PC-9 (cell line): ENCODE measurements at regions of chr20 and their contacts with region 1.

Region 1: GRCh38 chr20:59222253-59223181 is 58.9 kb downstream of the ZNF831 start:
- DNase-seq: peak; percentile 53 to 70
- H3K4me3 ChIP-seq: peak overlapping the region; percentile 50; the same call in 1 of the 2 replicates
- H3K27ac ChIP-seq: no peak overlapping the region
- H3K4me1 ChIP-seq: no peaks in the 10 kb centered on the region
- H3K27me3 ChIP-seq: peaks cover 97% of the 10 kb centered on the region
- CTCF ChIP-seq: peak; percentile 98

Region 2: GRCh38 chr20:58236612-58237330 is 985.7 kb before region 1 on chr20:
- CTCF ChIA-PET with region 1: no interaction called
- POLR2A ChIA-PET with region 1: no interaction called
- intact Hi-C with region 1: loop called (anchors 5 kb)
- DNase-seq: peak; percentile 51 to 75
- H3K4me3 ChIP-seq: peak overlapping the region; percentile 68
- H3K27ac ChIP-seq: no peak overlapping the region
- H3K4me1 ChIP-seq: peaks cover 8% of the 10 kb centered on the region; the same call in 1 of the 2 replicates
- H3K27me3 ChIP-seq: no peaks in the 10 kb centered on the region
- CTCF ChIP-seq: peak; percentile 97

Region 3: DNA sequence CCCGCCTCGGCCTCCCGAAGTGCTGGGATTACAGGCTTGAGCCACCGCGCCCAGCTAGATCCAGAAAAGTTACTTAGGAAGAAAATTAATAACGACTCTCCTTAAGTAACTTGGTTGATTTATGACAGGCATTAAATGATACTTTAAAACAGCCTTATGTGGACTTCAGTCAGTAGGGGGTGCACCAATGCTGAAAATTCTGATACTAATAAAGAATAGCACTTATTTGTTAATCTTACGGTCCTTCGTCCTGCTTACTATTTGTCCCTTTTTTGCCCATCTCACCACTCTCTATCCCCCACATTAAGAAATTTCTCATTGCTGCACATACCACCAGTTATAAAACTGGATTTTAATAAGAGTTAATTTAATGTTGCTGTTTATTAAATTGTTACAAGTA is 167.2 kb before region 1 on chr20:
- CTCF ChIA-PET with region 1: no interaction called
- POLR2A ChIA-PET with region 1: no interaction called
- intact Hi-C with region 1: loop called (anchors 1 kb)
- DNase-seq: no peak
- H3K4me3 ChIP-seq: no peak overlapping the region
- H3K27ac ChIP-seq: no peak overlapping the region
- H3K4me1 ChIP-seq: peaks cover under 1% of the 10 kb centered on the region; the same call in 1 of the 2 replicates
- H3K27me3 ChIP-seq: no peaks in the 10 kb centered on the region
- CTCF ChIP-seq: peak; percentile 73

Region 4: GRCh38 chr20:59087829-59088433 is 134.6 kb before region 1 on chr20:
- CTCF ChIA-PET with region 1: interaction called, 3 read pairs
- POLR2A ChIA-PET with region 1: no interaction called
- intact Hi-C with region 1: loop called (anchors 2 kb)
- DNase-seq: peak; percentile 48 to 70
- H3K4me3 ChIP-seq: no peak overlapping the region
- H3K27ac ChIP-seq: no peak overlapping the region
- H3K4me1 ChIP-seq: peaks cover 6% of the 10 kb centered on the region
- H3K27me3 ChIP-seq: no peaks in the 10 kb centered on the region
- CTCF ChIP-seq: peak; percentile 95

Region 5: DNA sequence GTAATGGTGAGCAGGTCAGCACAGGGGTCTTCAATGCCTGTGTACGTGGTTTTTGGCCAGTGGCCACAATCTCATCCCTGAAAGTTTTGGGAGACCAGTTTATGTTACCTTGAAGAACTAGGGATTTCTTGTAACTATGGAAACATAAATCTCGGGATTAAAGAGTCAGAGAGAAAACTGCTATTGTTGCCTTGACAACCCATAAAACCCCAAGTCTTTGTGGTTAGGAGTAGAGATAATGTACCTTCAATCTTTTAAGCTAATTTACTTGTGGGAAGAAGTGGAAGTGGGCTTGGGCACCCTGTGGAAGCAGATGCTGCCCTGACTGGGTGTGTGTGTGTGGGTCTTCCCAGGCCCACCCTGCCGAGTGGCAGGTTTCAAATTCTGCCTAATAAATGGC is 105.0 kb before region 1 on chr20:
- CTCF ChIA-PET with region 1: no interaction called
- POLR2A ChIA-PET with region 1: no interaction called
- intact Hi-C with region 1: no loop called
- DNase-seq: no peak
- H3K4me3 ChIP-seq: no peak overlapping the region
- H3K27ac ChIP-seq: no peak overlapping the region
- H3K4me1 ChIP-seq: no peaks in the 10 kb centered on the region
- H3K27me3 ChIP-seq: peaks cover 97% of the 10 kb centered on the region
- CTCF ChIP-seq: no peak